ENCODE measurements at regions of chr19 and their contacts with region 1.

Region 1: GRCh38 chr19:46030812-46031550 is 8.1 kb upstream of the PGLYRP1 start:
- DNase-seq: peak; percentile 71 to 82
- H3K4me3 ChIP-seq: no peak overlapping the region
- H3K4me3 Mint-ChIP-seq: peak overlapping the region; percentile 43
- H3K27ac Mint-ChIP-seq: peak overlapping the region; percentile 33
- H3K4me1 ChIP-seq: peaks cover 37% of the 10 kb centered on the region
- H3K4me1 Mint-ChIP-seq: peaks cover 32% of the 10 kb centered on the region
- H3K27me3 ChIP-seq: no peaks in the 10 kb centered on the region
- H3K27me3 Mint-ChIP-seq: no peaks in the 10 kb centered on the region
- CTCF ChIP-seq: no peak

Region 2: DNA sequence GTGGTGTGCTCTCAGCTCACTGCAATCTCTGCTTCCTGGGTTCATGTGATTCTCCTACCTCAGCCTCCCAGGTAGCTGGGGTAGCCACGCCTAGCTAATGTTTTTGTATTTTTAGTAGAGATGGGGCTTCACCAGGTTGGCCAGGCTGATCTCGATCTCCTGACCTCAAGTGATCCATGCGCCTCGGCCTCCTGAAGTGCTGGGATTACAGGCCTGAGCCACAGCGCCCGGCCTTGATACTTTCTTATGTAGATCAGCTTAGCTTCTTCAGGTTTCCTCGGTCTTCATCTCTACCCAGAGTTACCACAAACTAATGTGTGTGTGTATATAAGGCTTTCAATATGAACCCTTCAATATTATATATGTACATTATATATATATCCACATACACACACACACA is 45.7 kb before region 1 on chr19:
- CTCF ChIA-PET with region 1: no interaction called
- POLR2A ChIA-PET with region 1: no interaction called
- intact Hi-C with region 1: no loop called
- DNase-seq: no peak
- H3K4me3 ChIP-seq: no peak overlapping the region
- H3K4me3 Mint-ChIP-seq: no peak overlapping the region
- H3K27ac Mint-ChIP-seq: no peak overlapping the region
- H3K4me1 ChIP-seq: no peaks in the 10 kb centered on the region
- H3K4me1 Mint-ChIP-seq: no peaks in the 10 kb centered on the region
- H3K27me3 ChIP-seq: no peaks in the 10 kb centered on the region
- H3K27me3 Mint-ChIP-seq: peaks cover 10% of the 10 kb centered on the region
- CTCF ChIP-seq: no peak

Region 3: GRCh38 chr19:46068345-46069258 is 37.6 kb after region 1 on chr19:
- CTCF ChIA-PET with region 1: interaction called, 12 read pairs
- POLR2A ChIA-PET with region 1: no interaction called
- intact Hi-C with region 1: loop called (anchors 1 kb)
- DNase-seq: peak in 1 of 2 experiments; percentile 51
- H3K4me3 ChIP-seq: no peak overlapping the region
- H3K4me3 Mint-ChIP-seq: no peak overlapping the region
- H3K27ac Mint-ChIP-seq: peak overlapping the region; percentile 51
- H3K4me1 ChIP-seq: peaks cover 38% of the 10 kb centered on the region
- H3K4me1 Mint-ChIP-seq: peaks cover 27% of the 10 kb centered on the region
- H3K27me3 ChIP-seq: no peaks in the 10 kb centered on the region
- H3K27me3 Mint-ChIP-seq: no peaks in the 10 kb centered on the region
- CTCF ChIP-seq: no peak

Region 4: GRCh38 chr19:46124638-46125115 is 93.7 kb after region 1 on chr19 and contains the start of gene IGFL3:
- CTCF ChIA-PET with region 1: no interaction called
- POLR2A ChIA-PET with region 1: no interaction called
- intact Hi-C with region 1: no loop called
- DNase-seq: no peak
- H3K4me3 ChIP-seq: no peak within 1 kb of the TSS
- H3K4me3 Mint-ChIP-seq: no peak within 1 kb of the TSS
- H3K27ac Mint-ChIP-seq: no peak within 1 kb of the TSS
- H3K4me1 ChIP-seq: no peaks in the 10 kb centered on the region
- H3K4me1 Mint-ChIP-seq: peaks cover 6% of the 10 kb centered on the region
- H3K27me3 ChIP-seq: no peaks in the 10 kb centered on the region
- H3K27me3 Mint-ChIP-seq: no peaks in the 10 kb centered on the region
- CTCF ChIP-seq: no peak
- total RNA-seq, gene IGFL3: 0.53 TPM in 1 of 2 replicates, not detected in the other